ENCODE measurements at regions of chr12 and their contacts with region 1.

Region 1: GRCh38 chr12:107402041-107403022 is 283.3 kb upstream of the PWP1 start:
- DNase-seq: peak; percentile 81
- H3K4me3 Mint-ChIP-seq: no peak overlapping the region
- H3K27ac Mint-ChIP-seq: no peak overlapping the region
- H3K4me1 Mint-ChIP-seq: no peaks in the 10 kb centered on the region
- H3K27me3 Mint-ChIP-seq: no peaks in the 10 kb centered on the region
- CTCF ChIP-seq: peak; percentile 74

Region 2: DNA sequence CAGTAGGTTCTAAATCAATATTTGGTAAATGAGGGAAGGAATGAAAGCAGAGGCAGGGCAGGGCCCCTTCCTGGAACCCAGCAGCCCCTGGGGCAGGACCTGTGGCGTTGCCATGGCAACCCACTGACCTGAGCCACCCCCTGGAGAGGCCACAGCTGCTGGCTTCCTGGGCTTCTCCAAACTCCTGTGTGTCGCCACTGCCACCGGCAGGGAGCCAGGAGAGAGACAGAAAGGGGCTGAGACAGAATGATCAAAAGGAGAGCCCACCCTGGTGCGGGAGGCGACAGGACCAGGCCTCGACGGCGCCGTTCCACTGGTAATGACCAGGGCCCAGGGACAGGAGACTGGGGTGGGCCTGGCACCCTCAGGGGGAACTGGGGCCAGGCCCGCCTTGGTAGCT is 801.3 kb before region 1 on chr12:
- CTCF ChIA-PET with region 1: no interaction called
- POLR2A ChIA-PET with region 1: no interaction called
- intact Hi-C with region 1: no loop called
- DNase-seq: no peak
- H3K4me3 Mint-ChIP-seq: no peak overlapping the region
- H3K27ac Mint-ChIP-seq: no peak overlapping the region
- H3K4me1 Mint-ChIP-seq: no peaks in the 10 kb centered on the region
- H3K27me3 Mint-ChIP-seq: peaks cover 11% of the 10 kb centered on the region
- CTCF ChIP-seq: no peak

Region 3: DNA sequence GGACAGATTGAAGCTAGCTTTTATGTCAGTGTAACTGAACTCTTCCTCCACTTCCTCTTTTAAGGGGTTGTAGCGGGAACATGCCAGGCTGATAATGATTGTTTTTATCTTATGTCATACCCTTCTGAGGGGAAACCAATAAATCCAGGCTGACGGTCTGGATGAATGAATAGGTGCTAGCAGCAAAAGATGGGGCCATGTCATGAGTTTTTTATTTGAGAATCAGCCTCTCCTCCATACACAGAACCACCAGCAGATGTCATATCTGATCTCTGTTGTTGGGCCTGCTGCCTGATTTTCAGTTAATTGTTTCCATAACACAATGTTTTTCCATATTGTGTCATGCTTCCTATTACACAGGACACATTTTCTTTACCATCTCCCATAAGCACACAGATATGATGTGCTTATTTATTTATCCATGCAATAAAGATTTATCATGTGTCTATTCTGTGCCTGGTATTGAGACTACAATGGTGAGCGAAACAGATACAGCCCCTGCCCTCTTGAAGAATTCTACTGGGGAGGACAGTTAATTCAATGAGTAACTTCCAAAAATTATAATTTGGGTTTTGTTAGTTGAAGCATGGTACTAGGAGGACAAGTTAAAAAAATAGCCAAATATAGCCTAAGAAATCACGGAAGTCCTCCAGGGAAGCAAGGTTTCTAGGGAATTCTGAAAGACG is 275.4 kb before region 1 on chr12:
- CTCF ChIA-PET with region 1: interaction called, 150 read pairs
- POLR2A ChIA-PET with region 1: interaction called, 3 read pairs
- intact Hi-C with region 1: loop called (anchors 1 kb)
- DNase-seq: peak; percentile 28
- H3K4me3 Mint-ChIP-seq: no peak overlapping the region
- H3K27ac Mint-ChIP-seq: no peak overlapping the region
- H3K4me1 Mint-ChIP-seq: no peaks in the 10 kb centered on the region
- H3K27me3 Mint-ChIP-seq: peaks cover 11% of the 10 kb centered on the region
- CTCF ChIP-seq: peak; percentile 31

Region 4: DNA sequence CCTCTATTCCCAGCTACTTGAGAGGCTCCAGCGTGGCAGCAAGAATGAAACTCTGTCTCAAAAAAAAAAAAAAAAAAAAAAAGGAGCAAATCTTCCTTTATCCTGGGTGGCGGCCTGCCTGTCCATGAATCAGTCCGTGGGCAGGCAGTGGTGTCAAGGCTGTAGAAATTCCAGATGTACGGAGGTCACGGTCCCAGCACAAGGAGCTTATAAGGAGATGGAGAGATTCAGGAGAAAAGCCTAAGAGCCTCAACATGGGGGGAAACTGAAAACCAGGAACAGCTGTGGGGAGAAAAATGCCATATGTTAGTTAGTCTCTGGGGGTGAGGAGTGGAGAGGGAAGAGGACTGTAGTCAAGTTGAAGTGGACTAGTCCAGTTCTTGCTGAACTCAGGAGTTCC is 178.5 kb before region 1 on chr12:
- CTCF ChIA-PET with region 1: no interaction called
- POLR2A ChIA-PET with region 1: no interaction called
- intact Hi-C with region 1: loop called (anchors 5 kb)
- DNase-seq: no peak
- H3K4me3 Mint-ChIP-seq: no peak overlapping the region
- H3K27ac Mint-ChIP-seq: no peak overlapping the region
- H3K4me1 Mint-ChIP-seq: no peaks in the 10 kb centered on the region
- H3K27me3 Mint-ChIP-seq: peaks cover 37% of the 10 kb centered on the region
- CTCF ChIP-seq: no peak

Region 5: DNA sequence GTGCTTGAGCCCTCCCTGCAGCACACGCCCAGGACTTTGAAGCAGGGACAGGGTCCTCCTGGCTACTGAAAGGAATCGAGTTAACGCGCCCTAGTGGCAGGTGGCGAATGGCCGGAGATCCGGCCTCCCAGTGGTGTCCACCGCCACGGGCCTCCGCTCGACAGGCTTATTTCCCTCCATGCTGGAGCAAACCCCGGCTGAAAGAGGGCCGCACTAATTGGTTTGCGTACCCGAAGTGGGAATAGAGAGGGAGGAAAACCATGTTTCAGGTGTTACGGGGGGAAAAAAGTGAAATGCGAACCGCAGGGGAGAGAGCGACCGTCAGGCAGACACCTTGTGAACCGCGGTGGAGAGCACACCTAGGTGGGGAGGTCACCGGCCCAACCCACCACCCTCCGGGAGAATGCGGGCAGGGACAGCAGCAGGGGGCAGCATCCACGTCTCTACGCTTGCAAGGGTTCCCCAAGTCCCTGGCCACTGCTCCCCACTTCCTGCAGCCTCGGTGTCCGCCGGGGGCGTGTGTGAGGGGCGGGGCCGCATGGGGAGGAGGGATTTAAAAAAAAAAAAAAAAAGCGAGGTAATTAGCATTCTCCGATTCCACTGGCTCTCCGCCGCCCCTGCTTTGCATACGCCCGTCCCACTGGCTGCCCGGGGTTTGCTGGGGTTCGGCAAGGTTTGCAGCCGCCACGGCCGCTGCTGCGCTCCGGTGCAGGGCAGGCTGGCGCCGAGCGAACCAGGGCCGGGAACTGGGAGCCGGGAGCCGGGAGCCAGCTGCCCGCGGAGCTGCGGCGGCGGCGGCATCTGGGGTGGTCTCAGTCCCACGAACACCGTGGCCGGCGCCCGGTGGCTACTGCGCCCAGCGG is 84.3 kb before region 1 on chr12:
- CTCF ChIA-PET with region 1: interaction called, 3 read pairs
- POLR2A ChIA-PET with region 1: no interaction called
- intact Hi-C with region 1: loop called (anchors 2 kb)
- DNase-seq: peak; percentile 92
- H3K4me3 Mint-ChIP-seq: peak overlapping the region; percentile 77
- H3K27ac Mint-ChIP-seq: no peak overlapping the region
- H3K4me1 Mint-ChIP-seq: peaks cover 5% of the 10 kb centered on the region
- H3K27me3 Mint-ChIP-seq: peaks cover 54% of the 10 kb centered on the region
- CTCF ChIP-seq: peak; percentile 14

Measured in MCF 10A (cell line).